ENCODE measurements at regions of chr22 and their contacts with region 1.

Region 1: GRCh38 chr22:41403532-41404318 is 22.0 kb downstream of the TEF start:
- DNase-seq: no peak
- H3K4me3 ChIP-seq: no peak overlapping the region
- H3K27me3 ChIP-seq: no peaks in the 10 kb centered on the region
- CTCF ChIP-seq: peak; percentile 98

Region 2: GRCh38 chr22:41301105-41302020 is 102.4 kb before region 1 on chr22 and contains the start of gene ZC3H7B:
- CTCF ChIA-PET with region 1: no interaction called
- POLR2A ChIA-PET with region 1: no interaction called
- DNase-seq: no peak
- H3K4me3 ChIP-seq: peak within 1 kb of the TSS; percentile 63
- H3K27me3 ChIP-seq: no peaks in the 10 kb centered on the region
- CTCF ChIP-seq: peak; percentile 68
- polyA plus RNA-seq, gene ZC3H7B: 39.9 and 59.4 TPM in 2 replicates

Region 3: DNA sequence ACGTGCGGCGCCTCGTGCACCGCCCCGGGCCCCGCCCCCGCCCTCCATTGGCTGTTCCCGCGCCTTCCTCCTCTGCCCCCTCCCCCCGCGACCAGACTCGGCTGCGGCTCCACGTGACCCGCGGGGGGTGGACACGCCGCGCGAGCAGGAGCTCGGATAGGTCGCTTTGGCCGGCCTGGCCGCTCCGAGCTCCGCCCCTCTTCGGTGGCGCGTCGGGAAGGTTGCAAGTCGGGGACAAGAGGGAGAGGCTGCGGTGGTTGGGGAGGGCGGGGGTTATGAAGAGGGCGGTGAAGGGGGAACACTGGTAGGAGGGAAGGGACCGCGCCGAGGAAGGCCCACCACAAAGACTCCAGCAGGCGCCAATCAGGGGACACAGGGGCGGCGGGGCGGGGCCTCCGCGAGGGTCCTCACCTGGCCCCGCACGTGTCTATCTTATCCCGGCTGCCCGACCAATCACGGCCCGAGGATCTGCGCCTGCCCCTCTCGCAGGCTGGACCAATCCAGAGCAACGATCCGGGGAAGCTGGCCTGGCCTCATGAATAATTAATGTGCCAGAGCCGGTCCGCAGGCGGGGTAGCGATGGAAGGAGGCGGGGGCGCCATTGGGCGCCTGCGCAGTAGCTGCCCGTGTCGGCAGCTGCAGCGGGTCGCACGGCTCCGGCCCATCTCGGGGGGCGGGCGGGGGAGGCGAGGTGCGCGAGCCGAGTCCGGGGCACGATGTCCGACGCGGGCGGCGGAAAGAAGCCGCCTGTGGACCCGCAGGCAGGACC is 22.2 kb before region 1 on chr22 and contains the start of gene TEF:
- CTCF ChIA-PET with region 1: interaction called, 23 read pairs
- POLR2A ChIA-PET with region 1: interaction called, 7 read pairs
- DNase-seq: peak; percentile 88
- H3K4me3 ChIP-seq: peak within 1 kb of the TSS; percentile 70
- H3K27me3 ChIP-seq: peaks cover 4% of the 10 kb centered on the region; the same call in 1 of the 2 replicates
- CTCF ChIP-seq: no peak
- polyA plus RNA-seq, gene TEF: 21.0 and 28.7 TPM in 2 replicates

Region 4: DNA sequence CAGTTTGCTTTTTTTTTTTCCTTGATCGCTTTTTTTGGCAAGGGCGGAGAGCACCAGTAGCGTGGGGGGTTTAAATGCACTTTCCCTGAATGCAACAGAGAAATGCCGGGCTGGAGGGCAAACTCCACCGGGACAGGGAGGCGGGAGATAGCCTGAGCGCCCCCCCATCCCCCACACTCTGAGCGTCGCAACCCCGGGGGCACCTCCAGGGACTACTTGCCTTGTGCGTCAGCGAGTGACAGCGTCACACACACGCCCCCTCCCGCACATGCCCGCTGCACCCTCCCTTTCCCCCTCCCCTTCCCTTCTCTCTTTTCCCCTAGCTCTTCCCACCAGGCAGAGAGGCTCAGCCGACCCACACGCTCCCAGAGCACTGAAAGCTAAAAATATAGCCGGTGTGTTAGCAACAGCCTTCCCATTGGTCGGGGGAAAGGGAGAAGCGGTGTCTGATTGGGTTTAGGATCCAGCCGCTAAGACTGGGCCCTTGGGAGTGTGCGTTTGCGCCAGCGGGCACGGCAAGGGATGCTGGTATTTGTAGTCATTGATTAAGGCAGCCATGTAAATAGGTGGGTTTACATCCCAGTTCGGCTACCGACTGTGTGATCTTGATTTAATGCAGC is 44.6 kb after region 1 on chr22:
- CTCF ChIA-PET with region 1: interaction called, 29 read pairs
- POLR2A ChIA-PET with region 1: no interaction called
- DNase-seq: peak; percentile 99
- H3K4me3 ChIP-seq: peak overlapping the region; percentile 98
- H3K27me3 ChIP-seq: no peaks in the 10 kb centered on the region
- CTCF ChIP-seq: no peak

Region 5: GRCh38 chr22:41507330-41508063 is 103.8 kb after region 1 on chr22:
- CTCF ChIA-PET with region 1: interaction called, 170 read pairs
- POLR2A ChIA-PET with region 1: no interaction called
- DNase-seq: no peak
- H3K4me3 ChIP-seq: no peak overlapping the region
- H3K27me3 ChIP-seq: no peaks in the 10 kb centered on the region
- CTCF ChIP-seq: no peak

Region 6: GRCh38 chr22:41517172-41518047 is 113.7 kb after region 1 on chr22:
- CTCF ChIA-PET with region 1: interaction called, 170 read pairs
- POLR2A ChIA-PET with region 1: interaction called, 3 read pairs
- DNase-seq: no peak
- H3K4me3 ChIP-seq: no peak overlapping the region
- H3K27me3 ChIP-seq: no peaks in the 10 kb centered on the region
- CTCF ChIP-seq: peak; percentile 88

Region 7: DNA sequence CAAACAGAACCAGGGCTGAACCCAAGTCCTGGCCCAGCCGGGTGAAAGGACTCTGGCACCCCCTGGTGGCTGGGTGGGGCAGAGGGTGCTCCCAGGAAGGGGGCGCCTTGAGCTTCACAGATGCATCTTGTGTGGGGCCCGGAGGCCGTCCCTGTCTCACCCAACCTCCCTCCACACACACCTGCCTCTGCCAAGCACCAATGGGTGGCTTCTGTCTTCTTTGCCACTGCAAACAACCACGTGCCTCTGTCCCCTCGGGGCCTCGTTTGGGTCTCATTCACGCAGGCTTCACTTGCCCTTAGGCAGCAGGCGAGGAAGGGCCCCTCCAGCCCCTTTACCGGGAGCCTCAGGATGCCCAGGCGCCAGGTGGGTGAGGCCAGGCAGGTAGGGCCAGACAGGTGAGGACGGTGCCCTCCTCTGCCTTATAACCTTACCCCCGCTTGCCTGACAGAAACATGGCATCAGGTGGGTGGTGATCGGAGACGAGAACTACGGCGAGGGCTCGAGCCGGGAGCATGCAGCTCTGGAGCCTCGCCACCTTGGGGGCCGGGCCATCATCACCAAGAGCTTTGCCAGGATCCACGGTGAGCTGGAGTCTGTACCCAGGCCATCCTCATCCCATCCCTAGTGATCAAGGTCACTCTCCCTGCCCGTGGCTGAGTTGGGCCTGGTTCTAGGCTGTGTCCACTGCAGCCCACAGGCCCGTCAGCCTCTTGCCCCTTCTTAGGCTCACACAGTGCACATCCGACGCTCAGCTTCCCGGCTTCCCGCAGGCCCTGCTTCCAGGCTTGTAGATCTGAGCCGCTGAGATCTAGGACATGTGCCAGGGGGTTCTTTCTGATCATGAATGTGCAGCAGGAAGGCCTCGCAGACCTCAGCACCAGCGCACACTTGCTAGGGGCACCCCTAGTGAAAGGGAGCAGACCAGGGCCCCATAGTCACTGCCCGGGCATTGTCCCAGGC is 123.4 kb after region 1 on chr22:
- CTCF ChIA-PET with region 1: interaction called, 81 read pairs
- POLR2A ChIA-PET with region 1: no interaction called
- DNase-seq: no peak
- H3K4me3 ChIP-seq: no peak overlapping the region
- H3K27me3 ChIP-seq: no peaks in the 10 kb centered on the region
- CTCF ChIP-seq: peak; percentile 93

Region 8: DNA sequence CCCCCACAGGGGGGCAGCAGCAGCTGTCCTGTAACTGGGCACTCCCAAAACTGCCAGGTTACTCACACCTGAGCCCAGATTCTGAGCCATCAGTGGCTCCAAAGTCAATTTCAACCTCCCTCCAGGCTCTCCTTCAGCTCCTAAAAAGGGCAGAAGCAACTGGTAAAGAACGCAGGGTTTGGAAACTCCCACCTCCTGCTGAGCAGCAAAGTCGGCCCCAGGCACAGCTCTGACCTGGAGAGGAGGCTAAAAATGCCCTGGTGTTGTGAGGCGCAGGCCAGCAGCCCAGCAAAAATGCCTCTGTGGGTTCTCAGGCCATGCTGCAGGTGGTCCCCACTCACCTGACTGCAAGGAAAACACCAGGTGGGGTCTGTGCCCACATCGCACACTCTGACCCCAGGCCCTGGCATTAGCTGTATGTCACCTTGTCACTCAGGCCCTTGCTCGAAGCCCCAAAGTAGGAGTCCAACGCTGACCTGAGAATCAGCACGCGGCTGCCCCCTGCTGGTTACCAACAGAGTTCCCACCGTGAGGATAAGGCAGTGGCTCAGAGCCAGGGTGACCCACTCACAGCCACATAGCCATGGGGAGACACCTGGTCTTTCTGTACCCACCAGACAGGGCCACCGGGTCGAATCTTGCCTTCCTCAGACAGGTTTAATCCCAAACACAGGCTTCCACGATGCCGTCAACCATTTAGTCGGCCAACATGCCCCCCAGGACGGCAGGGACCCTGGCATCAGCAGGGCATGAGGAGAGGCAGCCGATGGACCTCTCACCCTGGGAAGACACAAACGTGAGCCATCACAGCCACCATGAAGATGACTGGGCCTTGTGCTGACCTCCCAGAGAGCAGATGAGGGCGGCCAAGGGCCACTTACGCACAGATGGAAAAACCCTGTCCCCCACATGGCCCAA is 129.4 kb after region 1 on chr22:
- CTCF ChIA-PET with region 1: interaction called, 81 read pairs
- POLR2A ChIA-PET with region 1: no interaction called
- DNase-seq: no peak
- H3K4me3 ChIP-seq: no peak overlapping the region
- H3K27me3 ChIP-seq: no peaks in the 10 kb centered on the region
- CTCF ChIP-seq: peak; percentile 88

Region 9: DNA sequence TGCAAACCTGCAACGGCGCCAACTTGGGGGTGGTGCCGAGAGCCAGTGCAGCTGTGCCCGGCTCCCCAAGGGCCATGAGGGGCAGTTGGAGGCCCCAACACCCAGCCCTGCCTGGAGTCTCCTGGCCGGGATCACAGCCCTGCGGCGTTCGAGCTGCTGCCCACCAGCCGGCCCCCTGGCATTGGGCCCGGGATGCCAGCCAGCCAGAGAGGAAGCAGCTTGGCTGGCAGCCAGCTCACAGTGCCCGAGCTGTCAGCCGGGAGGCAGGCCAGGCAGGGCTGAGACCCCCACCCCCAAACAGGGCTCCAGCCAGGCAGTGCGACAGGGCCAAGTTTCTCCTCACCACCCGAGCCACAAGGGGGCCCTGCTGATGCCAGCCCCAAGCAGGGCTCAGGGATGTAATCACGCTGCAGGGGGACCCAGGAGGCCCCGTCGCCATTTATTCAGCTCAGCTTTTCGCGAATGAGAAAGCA is 892.7 kb after region 1 on chr22:
- CTCF ChIA-PET with region 1: no interaction called
- POLR2A ChIA-PET with region 1: no interaction called
- DNase-seq: no peak
- H3K4me3 ChIP-seq: no peak overlapping the region
- H3K27me3 ChIP-seq: no peaks in the 10 kb centered on the region
- CTCF ChIP-seq: 0 out of 2 replicates have a peak, but pooled peaks have one; percentile 5

Measured in BJ (cell line).